Endothelial cell of umbilical vein (primary cell): ENCODE measurements at regions of chr14 and their contacts with region 1.

Region 1: DNA sequence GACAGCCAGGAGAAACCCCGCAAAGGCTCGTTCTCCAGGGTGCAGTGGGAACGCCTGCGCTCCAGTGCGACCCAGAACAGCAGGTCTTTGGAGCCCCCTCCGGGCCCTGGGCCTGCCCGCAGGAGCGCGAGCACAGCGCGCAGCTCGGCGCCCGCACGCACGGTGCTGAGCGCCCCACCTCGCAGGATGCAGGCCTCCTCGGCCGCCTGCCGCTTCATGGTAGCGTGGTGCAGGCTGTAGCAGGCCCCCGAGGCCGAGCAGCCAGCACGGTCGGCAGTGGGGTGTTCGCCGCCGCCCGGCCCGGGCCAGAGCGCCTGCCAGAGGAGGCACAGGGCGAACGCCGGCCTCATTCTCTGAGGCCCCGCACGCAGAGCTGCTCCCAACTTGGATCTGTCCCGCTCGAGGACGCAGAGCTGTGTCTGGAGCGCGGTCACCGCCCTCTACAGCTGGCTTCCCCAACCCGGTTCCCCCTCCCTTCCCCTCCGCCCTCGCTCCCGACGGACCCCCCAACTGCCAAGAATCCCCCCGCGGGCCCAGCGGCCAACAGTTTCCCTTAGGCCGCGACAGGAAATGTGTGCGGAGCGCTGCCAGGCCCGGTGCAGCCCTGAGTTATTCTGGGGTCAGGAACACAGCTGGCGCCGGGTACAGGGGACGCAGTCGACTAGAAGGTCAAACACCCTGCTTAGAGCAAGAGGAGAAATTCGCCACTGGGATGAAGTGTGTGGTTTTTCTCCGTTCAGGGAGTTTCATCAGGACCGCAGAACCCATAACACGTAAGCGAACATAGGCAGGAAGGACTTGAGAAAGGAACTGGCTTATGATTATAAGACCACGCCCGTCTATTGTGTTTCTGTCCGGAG is at the start of gene CLEC14A:
- DNase-seq: peak; percentile 100
- H3K4me3 ChIP-seq: peak within 1 kb of the TSS; percentile 86 to 100 (median 99)
- H3K27ac ChIP-seq: peak within 1 kb of the TSS; percentile 89
- H3K4me1 ChIP-seq: peaks cover 20% of the 10 kb centered on the region
- H3K27me3 ChIP-seq: no peaks in the 10 kb centered on the region
- CTCF ChIP-seq: no peak
- POLR2A ChIP-seq: peak; percentile 87
- total RNA-seq, gene CLEC14A: 396 and 414 TPM in 2 replicates

Region 2: DNA sequence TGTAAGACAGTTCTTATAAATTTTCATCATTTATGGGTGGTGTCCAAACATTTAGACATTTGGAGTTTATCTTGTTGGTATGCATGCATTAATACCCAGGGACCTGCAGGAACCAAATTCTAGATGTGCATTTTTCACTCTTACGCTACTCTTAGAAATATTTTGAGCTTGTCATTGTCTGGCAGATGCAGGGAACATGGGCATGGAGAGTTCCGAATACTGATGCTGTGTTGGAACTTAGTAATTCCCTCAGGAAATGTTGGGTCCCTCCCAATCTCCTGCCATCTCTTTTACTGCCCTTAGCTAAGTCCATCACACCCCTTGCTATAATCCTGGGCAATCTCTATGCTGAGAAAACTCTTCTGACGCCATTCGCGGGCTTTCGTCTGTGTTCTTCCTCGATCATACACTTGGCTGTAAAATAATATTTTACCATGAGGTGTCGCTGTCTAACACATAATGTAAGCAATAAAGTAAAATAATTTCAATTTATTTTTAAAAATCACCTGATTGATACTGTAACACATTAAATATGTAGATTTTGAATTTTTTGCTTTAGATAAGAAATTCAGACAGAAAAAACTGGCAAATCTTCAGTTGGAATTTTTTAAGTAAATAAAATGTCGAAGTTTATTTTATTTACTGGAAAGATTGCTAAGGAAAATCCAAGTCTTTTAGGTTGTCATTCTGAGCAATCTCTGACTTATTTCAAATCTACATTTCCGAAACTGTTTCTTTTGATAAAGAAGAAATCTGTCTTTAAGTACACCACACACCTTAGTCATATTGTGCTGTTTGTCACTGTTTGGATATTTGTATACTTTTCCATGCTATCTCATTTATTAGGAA is 352.3 kb before region 1 on chr14:
- CTCF ChIA-PET with region 1: interaction called, 7 read pairs
- POLR2A ChIA-PET with region 1: no interaction called
- dilution Hi-C with region 1: no loop called
- intact Hi-C with region 1: loop called (anchors 2 kb)
- DNase-seq: peak; percentile 64
- H3K4me3 ChIP-seq: no peak overlapping the region
- H3K27ac ChIP-seq: no peak overlapping the region
- H3K4me1 ChIP-seq: peaks cover 3% of the 10 kb centered on the region
- H3K27me3 ChIP-seq: peaks cover 22 to 23% of the 10 kb centered on the region in 2 experiments
- CTCF ChIP-seq: peak; percentile 33 to 45
- POLR2A ChIP-seq: no peak

Region 3: GRCh38 chr14:38290601-38291190 is 34.8 kb after region 1 on chr14:
- CTCF ChIA-PET with region 1: interaction called, 54 read pairs
- POLR2A ChIA-PET with region 1: interaction called, 30 read pairs
- dilution Hi-C with region 1: no loop called
- intact Hi-C with region 1: loop called (anchors 1 kb)
- DNase-seq: peak; percentile 99
- H3K4me3 ChIP-seq: peak overlapping the region in 1 of 3 experiments; percentile 34
- H3K27ac ChIP-seq: peak overlapping the region; percentile 99
- H3K4me1 ChIP-seq: peaks cover 44% of the 10 kb centered on the region
- H3K27me3 ChIP-seq: no peaks in the 10 kb centered on the region
- CTCF ChIP-seq: no peak
- POLR2A ChIP-seq: peak; percentile 74

Region 4: DNA sequence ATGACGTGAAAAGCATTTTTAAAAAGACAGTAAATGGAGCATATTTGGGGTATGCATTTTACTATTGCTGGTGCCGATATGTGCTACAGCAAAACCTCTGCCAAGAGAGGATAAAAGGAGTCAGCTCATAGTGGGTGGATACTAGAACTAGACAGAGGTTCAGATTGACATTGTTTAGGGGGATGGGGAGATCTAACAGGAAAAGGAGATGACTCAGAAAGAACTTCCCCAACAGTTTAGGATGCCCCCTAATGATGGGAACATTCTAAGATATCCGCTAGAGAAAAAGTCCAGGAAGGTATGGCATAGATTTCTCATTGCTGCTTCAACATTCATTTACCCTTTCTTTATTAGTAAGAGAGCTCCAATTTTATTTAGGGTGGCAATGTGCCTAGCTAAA is 110.5 kb after region 1 on chr14:
- CTCF ChIA-PET with region 1: interaction called, 29 read pairs
- POLR2A ChIA-PET with region 1: interaction called, 21 read pairs
- dilution Hi-C with region 1: no loop called
- intact Hi-C with region 1: loop called (anchors 1 kb)
- DNase-seq: peak; percentile 65
- H3K4me3 ChIP-seq: no peak overlapping the region
- H3K27ac ChIP-seq: peak overlapping the region; percentile 65
- H3K4me1 ChIP-seq: peaks cover 39% of the 10 kb centered on the region
- H3K27me3 ChIP-seq: no peaks in the 10 kb centered on the region
- CTCF ChIP-seq: no peak
- POLR2A ChIP-seq: no peak

Region 5: DNA sequence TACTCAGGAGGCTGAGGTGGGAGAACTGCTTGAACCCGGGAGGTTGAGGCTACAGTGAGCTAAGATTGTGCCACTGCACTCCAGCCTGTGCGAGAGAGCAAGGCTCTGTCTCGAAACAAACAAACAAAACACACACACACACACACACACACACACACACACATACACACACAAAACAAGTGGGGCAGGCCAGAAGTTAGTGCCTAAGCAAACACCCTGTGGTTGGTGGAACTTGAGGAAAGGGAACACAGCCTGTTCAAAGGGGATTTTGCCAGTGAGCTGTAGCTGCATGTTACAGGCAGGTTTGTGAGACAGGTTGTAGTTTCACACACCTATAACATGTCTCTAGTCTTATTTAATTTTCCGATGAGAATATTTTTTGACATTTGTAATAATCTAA is 175.3 kb after region 1 on chr14:
- CTCF ChIA-PET with region 1: no interaction called
- POLR2A ChIA-PET with region 1: no interaction called
- dilution Hi-C with region 1: no loop called
- intact Hi-C with region 1: no loop called
- DNase-seq: no peak
- H3K4me3 ChIP-seq: no peak overlapping the region
- H3K27ac ChIP-seq: no peak overlapping the region
- H3K4me1 ChIP-seq: no peaks in the 10 kb centered on the region
- H3K27me3 ChIP-seq: no peaks in the 10 kb centered on the region
- CTCF ChIP-seq: no peak
- POLR2A ChIP-seq: no peak

Region 6: GRCh38 chr14:38605193-38606114 is 349.6 kb after region 1 on chr14:
- CTCF ChIA-PET with region 1: interaction called, 120 read pairs
- POLR2A ChIA-PET with region 1: interaction called, 9 read pairs
- dilution Hi-C with region 1: no loop called
- intact Hi-C with region 1: loop called (anchors 1 kb)
- DNase-seq: peak; percentile 32
- H3K4me3 ChIP-seq: no peak overlapping the region
- H3K27ac ChIP-seq: no peak overlapping the region
- H3K4me1 ChIP-seq: no peaks in the 10 kb centered on the region
- H3K27me3 ChIP-seq: no peaks in the 10 kb centered on the region
- CTCF ChIP-seq: peak; percentile 7 to 22
- POLR2A ChIP-seq: no peak

Region 7: DNA sequence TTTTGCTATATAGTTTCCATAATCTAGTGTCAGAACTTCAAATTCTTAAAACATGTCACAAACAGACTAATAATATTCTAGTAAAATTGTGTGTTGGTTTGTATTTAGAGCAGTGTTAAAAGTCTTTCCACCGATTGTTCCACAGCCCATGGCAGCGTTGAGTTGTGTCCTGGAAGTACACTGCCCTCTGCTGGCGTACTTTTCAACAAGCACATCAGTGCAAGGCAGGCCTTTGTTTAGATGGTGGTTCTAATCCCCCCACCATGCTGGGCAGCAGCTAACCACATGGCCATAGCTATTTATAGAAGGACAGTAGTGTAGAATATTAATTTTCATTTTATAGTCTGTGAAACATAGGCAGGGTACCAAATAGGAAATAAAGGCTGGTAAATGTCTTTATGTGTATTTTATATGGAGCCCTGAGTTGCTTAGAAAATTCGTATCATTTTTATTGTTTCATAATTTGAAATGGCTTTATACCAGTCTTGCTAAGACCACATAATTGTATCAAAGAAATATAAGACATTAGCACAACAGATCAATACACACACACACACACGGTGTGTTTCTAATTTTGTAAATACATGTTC is 611.8 kb after region 1 on chr14:
- CTCF ChIA-PET with region 1: interaction called, 6 read pairs
- POLR2A ChIA-PET with region 1: no interaction called
- dilution Hi-C with region 1: no loop called
- intact Hi-C with region 1: loop called (anchors 1 kb)
- DNase-seq: peak; percentile 86
- H3K4me3 ChIP-seq: no peak overlapping the region
- H3K27ac ChIP-seq: no peak overlapping the region
- H3K4me1 ChIP-seq: peaks cover 5% of the 10 kb centered on the region
- H3K27me3 ChIP-seq: no peaks in the 10 kb centered on the region
- CTCF ChIP-seq: peak; percentile 75 to 88
- POLR2A ChIP-seq: no peak